Activated B cell treated with CpG ODN at 0.5 μM for 24 hours (primary cell): ENCODE measurements at regions of chr6 and their contacts with region 1.

Region 1: DNA sequence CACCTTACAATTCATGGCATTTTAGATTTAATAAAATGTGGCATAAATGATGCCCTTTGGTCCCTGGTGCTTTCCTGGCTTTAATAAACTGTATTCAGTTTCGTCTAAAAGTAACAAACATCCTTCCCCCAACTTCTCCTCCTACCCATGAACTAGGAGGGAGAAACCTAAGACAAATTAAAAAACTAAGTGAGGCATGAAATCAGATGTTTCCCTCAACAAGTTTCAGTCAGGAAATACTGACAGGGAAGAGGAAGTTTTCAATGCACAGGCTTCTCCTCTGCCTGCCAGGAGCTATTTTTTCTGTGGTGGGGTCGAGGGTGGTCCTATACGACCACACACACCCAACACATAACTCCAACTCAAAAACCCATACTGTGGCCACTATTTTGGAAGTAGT is 10.0 kb downstream of the HBS1L start:
- DNase-seq: no peak
- ATAC-seq: peak; percentile 21
- H3K4me3 Mint-ChIP-seq: peak overlapping the region; percentile 26
- H3K27ac Mint-ChIP-seq: peak overlapping the region; percentile 43
- H3K4me1 Mint-ChIP-seq: peaks cover 41% of the 10 kb centered on the region
- H3K27me3 Mint-ChIP-seq: no peaks in the 10 kb centered on the region
- CTCF ChIP-seq: no peak

Region 2: GRCh38 chr6:135030056-135030473 is 14.6 kb before region 1 on chr6:
- CTCF ChIA-PET with region 1: no interaction called
- POLR2A ChIA-PET with region 1: no interaction called
- intact Hi-C with region 1: loop called (anchors 2 kb)
- DNase-seq: no peak
- ATAC-seq: peak; percentile 60
- H3K4me3 Mint-ChIP-seq: peak overlapping the region; percentile 4
- H3K27ac Mint-ChIP-seq: peak overlapping the region; percentile 13
- H3K4me1 Mint-ChIP-seq: peaks cover 10% of the 10 kb centered on the region
- H3K27me3 Mint-ChIP-seq: no peaks in the 10 kb centered on the region
- CTCF ChIP-seq: no peak